Activated CD4-positive, alpha-beta T cell treated with anti-CD3 and anti-CD28 coated beads for 36 hours (primary cell): ENCODE measurements at regions of chr6 and their contacts with region 1.

Region 1: GRCh38 chr6:35601331-35602132 is 87.2 kb downstream of the FKBP5 start:
- DNase-seq: peak; percentile 68
- ATAC-seq: peak; percentile 80
- H3K4me3 Mint-ChIP-seq: peak overlapping the region; percentile 47
- H3K27ac Mint-ChIP-seq: peak overlapping the region; percentile 80
- H3K4me1 Mint-ChIP-seq: peaks cover 76% of the 10 kb centered on the region
- H3K27me3 Mint-ChIP-seq: no peaks in the 10 kb centered on the region

Region 2: GRCh38 chr6:35590622-35591066 is 10.9 kb before region 1 on chr6:
- CTCF ChIA-PET with region 1: interaction called, 30 read pairs
- POLR2A ChIA-PET with region 1: no interaction called
- intact Hi-C with region 1: no loop called
- DNase-seq: no peak
- ATAC-seq: no peak
- H3K4me3 Mint-ChIP-seq: no peak overlapping the region
- H3K27ac Mint-ChIP-seq: peak overlapping the region; percentile 47
- H3K4me1 Mint-ChIP-seq: peaks cover 88% of the 10 kb centered on the region
- H3K27me3 Mint-ChIP-seq: no peaks in the 10 kb centered on the region

Region 3: GRCh38 chr6:35624341-35625070 is 23.0 kb after region 1 on chr6:
- CTCF ChIA-PET with region 1: interaction called, 10 read pairs
- POLR2A ChIA-PET with region 1: interaction called, 7 read pairs
- intact Hi-C with region 1: no loop called
- DNase-seq: no peak
- ATAC-seq: peak; percentile 57
- H3K4me3 Mint-ChIP-seq: no peak overlapping the region
- H3K27ac Mint-ChIP-seq: peak overlapping the region; percentile 58
- H3K4me1 Mint-ChIP-seq: peaks cover 41% of the 10 kb centered on the region
- H3K27me3 Mint-ChIP-seq: no peaks in the 10 kb centered on the region

Region 4: DNA sequence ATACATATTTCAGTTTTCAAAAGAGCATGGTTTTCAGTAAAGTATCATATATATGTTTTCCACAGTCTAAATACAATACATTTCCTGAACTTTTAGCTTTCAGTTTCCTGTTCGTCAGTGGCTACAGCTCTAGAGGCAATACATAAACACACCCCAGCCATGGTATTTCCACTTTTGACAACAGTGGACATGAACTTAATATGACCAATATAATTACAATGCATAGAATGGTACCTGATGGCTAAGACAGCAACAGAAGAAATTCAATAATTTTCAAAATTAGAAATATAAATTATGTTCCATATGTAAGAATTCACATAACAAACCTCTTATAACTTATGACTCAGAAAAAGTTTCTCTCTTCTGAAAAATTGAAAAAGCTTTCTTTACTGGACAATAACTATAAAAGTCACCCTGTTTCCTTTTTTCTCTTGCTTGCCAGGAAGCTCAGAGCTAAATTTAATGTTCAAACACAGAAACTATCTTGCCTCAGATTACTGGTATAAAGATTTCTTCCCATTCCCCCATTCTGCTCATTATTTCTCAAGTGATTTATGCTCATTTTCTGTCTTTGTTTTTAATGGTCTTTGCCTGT is 68.0 kb after region 1 on chr6:
- CTCF ChIA-PET with region 1: interaction called, 3 read pairs
- POLR2A ChIA-PET with region 1: no interaction called
- intact Hi-C with region 1: loop called in 1 of 2 experiments (anchors 5 kb)
- DNase-seq: no peak
- ATAC-seq: peak; percentile 60
- H3K4me3 Mint-ChIP-seq: peak overlapping the region; percentile 59
- H3K27ac Mint-ChIP-seq: peak overlapping the region; percentile 87
- H3K4me1 Mint-ChIP-seq: peaks cover 49% of the 10 kb centered on the region
- H3K27me3 Mint-ChIP-seq: no peaks in the 10 kb centered on the region

Region 5: GRCh38 chr6:35678021-35678654 is 76.6 kb after region 1 on chr6:
- CTCF ChIA-PET with region 1: interaction called, 7 read pairs
- POLR2A ChIA-PET with region 1: no interaction called
- intact Hi-C with region 1: loop called in 1 of 2 experiments (anchors 5 kb)
- DNase-seq: no peak
- ATAC-seq: no peak
- H3K4me3 Mint-ChIP-seq: peak overlapping the region; percentile 9
- H3K27ac Mint-ChIP-seq: peak overlapping the region; percentile 78
- H3K4me1 Mint-ChIP-seq: peaks cover 83% of the 10 kb centered on the region
- H3K27me3 Mint-ChIP-seq: no peaks in the 10 kb centered on the region

Region 6: DNA sequence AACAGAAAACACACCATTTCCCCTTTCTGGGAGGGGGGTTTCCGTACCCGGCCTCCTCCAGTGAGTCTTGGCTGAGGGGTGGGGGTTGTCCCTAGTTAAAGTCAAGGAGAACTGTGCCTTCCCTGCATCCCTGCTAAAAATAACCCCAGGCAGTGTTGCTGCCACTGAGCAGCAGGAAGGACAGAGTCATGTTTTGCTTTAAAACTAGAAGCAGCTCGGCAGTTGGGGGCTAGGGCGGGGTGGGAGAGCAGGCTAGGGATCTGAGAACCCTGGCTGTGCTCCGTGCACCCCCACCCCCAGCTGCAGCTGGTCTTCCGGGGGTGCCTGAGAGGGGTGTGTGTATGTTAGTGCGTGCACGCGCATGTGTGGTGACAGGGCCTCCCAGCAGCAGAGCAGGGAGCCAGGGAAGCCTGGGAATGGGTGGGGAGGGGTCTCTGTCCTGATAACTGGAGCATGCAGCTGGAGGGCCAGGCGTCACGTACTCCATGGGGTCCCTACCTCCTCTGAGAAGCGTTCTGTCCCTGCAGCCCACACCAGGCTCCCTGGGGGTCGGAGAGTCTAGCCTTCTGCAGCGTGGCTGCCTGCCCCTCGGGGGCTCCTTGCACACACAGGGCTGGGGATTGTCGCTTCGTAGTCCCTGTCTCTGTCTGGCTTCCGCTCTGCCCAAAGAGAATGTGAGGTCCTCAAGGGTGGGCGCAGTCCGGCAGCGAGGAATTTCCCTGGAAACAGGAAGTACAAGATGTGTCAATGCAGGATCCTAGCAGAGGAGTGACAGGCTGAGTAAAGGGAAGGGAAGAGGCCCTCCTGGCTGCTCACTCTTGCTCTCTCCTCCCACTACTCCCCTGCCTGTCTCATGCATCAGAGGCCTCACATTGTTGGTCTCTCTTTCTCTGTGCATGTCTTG is 118.5 kb after region 1 on chr6:
- CTCF ChIA-PET with region 1: no interaction called
- POLR2A ChIA-PET with region 1: no interaction called
- intact Hi-C with region 1: no loop called
- DNase-seq: peak; percentile 73
- ATAC-seq: peak; percentile 54
- H3K4me3 Mint-ChIP-seq: peak overlapping the region; percentile 75
- H3K27ac Mint-ChIP-seq: peak overlapping the region; percentile 90
- H3K4me1 Mint-ChIP-seq: peaks cover 81% of the 10 kb centered on the region
- H3K27me3 Mint-ChIP-seq: no peaks in the 10 kb centered on the region